PC-9 (cell line): ENCODE measurements at regions of chr4 and their contacts with region 1.

Region 1: DNA sequence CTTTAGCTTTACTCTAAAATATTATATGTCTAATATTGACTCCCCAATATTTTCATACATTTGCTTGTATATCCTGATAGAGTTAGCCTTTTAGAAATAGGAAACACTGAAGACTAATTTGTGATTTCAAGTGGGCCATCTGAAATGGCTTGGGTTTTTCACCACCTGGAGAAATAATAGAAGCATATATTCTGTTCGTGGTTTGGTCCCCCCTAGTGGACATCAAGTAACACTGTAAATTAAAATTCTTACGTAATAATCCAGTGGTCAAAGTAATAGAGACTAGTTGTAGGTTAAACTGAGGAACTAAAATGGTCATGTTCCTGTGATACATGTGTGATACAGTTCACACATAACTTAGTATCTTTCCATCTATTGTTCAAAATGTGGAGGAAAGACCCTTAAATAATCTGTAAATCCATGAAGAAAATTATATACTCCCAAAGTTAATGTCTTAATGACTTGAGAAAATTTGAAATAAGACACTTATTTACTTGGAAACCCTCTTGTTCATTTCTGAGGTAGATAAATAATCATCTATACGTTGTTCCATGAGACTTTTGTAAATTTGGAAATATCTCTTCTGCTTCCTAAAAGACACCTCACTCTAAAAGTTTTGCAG is 79.8 kb upstream of the SMARCAD1 start:
- DNase-seq: no peak
- H3K4me3 ChIP-seq: no peak overlapping the region
- H3K27ac ChIP-seq: no peak overlapping the region
- H3K4me1 ChIP-seq: no peaks in the 10 kb centered on the region
- H3K27me3 ChIP-seq: no peaks in the 10 kb centered on the region
- CTCF ChIP-seq: peak; percentile 75

Region 2: DNA sequence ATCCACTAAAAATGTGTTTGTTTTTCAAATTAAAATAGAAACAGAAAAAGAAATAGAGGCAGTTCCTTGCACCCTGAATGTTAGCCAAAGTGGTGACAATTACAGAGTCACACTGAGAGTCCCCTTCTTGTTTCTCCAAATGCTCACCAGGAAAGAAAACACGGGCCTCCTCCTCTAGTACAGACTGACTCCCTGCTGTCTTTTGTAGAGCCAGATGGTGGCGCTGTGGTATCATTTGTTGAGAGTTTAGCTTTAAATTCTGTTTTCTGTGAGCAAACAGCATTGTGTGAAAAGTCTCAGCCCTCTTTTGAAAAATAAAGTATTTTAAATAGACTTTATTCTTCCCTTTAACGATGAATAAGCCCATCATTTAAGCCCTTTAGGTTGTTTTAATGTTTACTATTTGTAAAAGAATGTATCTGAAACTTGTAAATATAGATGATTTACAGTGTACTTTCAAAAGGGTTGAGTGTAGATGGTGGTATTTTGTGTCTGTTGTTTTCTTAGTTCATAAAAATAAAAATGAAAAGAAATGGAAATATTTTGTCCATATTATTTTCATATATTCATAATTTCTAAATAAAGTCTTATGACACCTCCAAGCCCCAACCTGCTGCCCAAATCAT is 336.1 kb before region 1 on chr4:
- CTCF ChIA-PET with region 1: no interaction called
- POLR2A ChIA-PET with region 1: no interaction called
- intact Hi-C with region 1: loop called (anchors 1 kb)
- DNase-seq: peak; percentile 22 to 34
- H3K4me3 ChIP-seq: no peak overlapping the region
- H3K27ac ChIP-seq: no peak overlapping the region
- H3K4me1 ChIP-seq: no peaks in the 10 kb centered on the region
- H3K27me3 ChIP-seq: no peaks in the 10 kb centered on the region
- CTCF ChIP-seq: peak; percentile 82

Region 3: DNA sequence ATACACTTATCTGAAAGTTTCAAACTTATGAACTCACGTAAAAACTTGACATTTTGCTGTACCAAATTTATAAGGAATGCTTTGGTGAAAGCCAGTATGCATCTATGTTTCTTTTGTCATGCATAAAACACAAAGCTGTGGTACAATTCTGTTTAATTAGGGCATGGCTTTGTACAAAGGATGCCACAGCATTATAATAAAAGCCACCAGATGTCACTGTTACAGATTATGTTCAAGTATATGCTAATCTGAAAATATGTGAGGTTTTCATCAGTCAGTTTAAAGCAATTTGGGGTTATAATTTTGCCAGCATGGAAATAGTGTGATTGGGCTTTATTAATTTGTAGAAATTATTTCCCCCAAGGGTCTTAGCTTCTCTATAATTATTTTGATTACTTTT is 230.3 kb before region 1 on chr4:
- CTCF ChIA-PET with region 1: no interaction called
- POLR2A ChIA-PET with region 1: no interaction called
- intact Hi-C with region 1: loop called (anchors 5 kb)
- DNase-seq: no peak
- H3K4me3 ChIP-seq: no peak overlapping the region
- H3K27ac ChIP-seq: no peak overlapping the region
- H3K4me1 ChIP-seq: no peaks in the 10 kb centered on the region
- H3K27me3 ChIP-seq: no peaks in the 10 kb centered on the region
- CTCF ChIP-seq: 0 out of 2 replicates have a peak, but pooled peaks have one; percentile 24